ENCODE measurements at regions of chr2 and their contacts with region 1.

Region 1: GRCh38 chr2:62293490-62294271 is 97.8 kb downstream of the B3GNT2 start:
- DNase-seq: peak; percentile 99
- H3K4me3 ChIP-seq: no peak overlapping the region
- H3K27ac ChIP-seq: peak overlapping the region; percentile 90 to 98 (median 93)
- H3K4me1 ChIP-seq: peaks cover 23 to 35% of the 10 kb centered on the region in 2 donors
- H3K27me3 ChIP-seq: no peaks in the 10 kb centered on the region
- CTCF ChIP-seq: no peak
- POLR2A ChIP-seq: peak in 1 of 2 donors; percentile 37

Region 2: GRCh38 chr2:62000538-62000937 is 293.1 kb before region 1 on chr2:
- intact Hi-C with region 1: loop called (anchors 5 kb)
- DNase-seq: no peak
- H3K4me3 ChIP-seq: no peak overlapping the region
- H3K27ac ChIP-seq: peak overlapping the region in 2 of 3 donors; percentile 4 to 30
- H3K4me1 ChIP-seq: peaks cover 14 to 26% of the 10 kb centered on the region in 2 donors
- H3K27me3 ChIP-seq: no peaks in the 10 kb centered on the region
- CTCF ChIP-seq: no peak
- POLR2A ChIP-seq: no peak